ENCODE measurements at regions of chr7 and their contacts with region 1.

Region 1: DNA sequence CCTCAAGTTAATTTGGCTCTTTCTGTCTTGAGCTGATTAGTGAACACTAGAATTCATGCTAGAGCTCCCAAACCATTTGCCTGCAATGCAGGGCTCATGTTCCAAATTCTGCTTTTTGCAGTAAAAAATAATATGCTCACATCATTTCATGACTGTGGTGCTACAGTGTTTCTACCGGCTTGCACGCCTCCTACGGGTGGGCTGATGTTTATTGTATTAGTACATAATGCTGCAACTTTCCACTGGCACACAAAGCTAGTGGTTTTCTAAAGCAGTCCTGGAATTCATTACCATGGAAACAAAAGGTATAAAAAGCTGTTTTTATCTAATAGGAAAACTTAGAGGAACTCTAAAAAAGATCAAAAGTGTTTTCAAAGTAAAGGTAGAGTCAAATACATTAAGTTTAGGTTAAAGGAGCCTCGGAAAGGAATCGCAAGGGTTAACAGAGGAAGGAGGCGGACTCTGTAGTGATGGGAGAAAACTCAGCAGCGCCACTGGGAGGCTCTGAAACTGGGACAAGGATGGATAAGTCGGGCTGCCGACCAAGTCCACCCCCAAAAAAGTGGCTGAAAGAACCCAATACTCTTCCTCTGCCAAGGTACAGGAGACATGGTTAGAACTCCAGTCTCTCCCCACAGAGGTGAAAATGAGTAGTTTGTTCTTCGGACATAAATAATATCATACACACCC is 25.9 kb downstream of the GRM8 start:
- DNase-seq: no peak
- ATAC-seq: no peak
- H3K4me3 Mint-ChIP-seq: no peak overlapping the region
- H3K27ac Mint-ChIP-seq: no peak overlapping the region
- H3K4me1 Mint-ChIP-seq: no peaks in the 10 kb centered on the region
- H3K27me3 Mint-ChIP-seq: peaks cover 39% of the 10 kb centered on the region

Region 2: GRCh38 chr7:126790763-126791162 is 436.1 kb before region 1 on chr7:
- CTCF ChIA-PET with region 1: no interaction called
- POLR2A ChIA-PET with region 1: no interaction called
- intact Hi-C with region 1: no loop called
- DNase-seq: no peak
- ATAC-seq: no peak
- H3K4me3 Mint-ChIP-seq: no peak overlapping the region
- H3K27ac Mint-ChIP-seq: no peak overlapping the region
- H3K4me1 Mint-ChIP-seq: no peaks in the 10 kb centered on the region
- H3K27me3 Mint-ChIP-seq: peaks cover 8% of the 10 kb centered on the region

Region 3: DNA sequence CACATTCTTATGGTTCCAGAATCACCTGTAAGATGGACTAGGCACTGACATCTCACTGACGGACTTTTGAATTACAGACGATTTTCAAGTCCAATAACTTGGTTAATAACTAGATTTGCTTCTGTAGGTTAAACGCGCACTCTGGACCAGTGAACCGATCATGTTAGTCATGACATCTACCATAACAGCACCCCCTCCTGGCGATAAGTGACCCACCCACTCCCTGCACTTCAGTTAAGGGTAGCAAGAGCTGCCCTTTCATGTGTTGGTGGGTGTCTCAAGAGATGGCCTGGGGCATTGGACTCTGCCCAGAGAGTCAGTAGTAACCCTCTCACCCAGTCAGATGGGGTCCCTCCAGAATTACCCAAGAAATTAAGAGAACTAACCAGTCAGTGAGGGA is 13.0 kb after region 1 on chr7:
- CTCF ChIA-PET with region 1: interaction called, 4 read pairs
- POLR2A ChIA-PET with region 1: interaction called, 10 read pairs
- intact Hi-C with region 1: no loop called
- DNase-seq: peak; percentile 32
- ATAC-seq: no peak
- H3K4me3 Mint-ChIP-seq: no peak overlapping the region
- H3K27ac Mint-ChIP-seq: no peak overlapping the region
- H3K4me1 Mint-ChIP-seq: no peaks in the 10 kb centered on the region
- H3K27me3 Mint-ChIP-seq: peaks cover 40% of the 10 kb centered on the region

Region 4: GRCh38 chr7:127266047-127266446 is 39.2 kb after region 1 on chr7:
- CTCF ChIA-PET with region 1: no interaction called
- POLR2A ChIA-PET with region 1: no interaction called
- intact Hi-C with region 1: no loop called
- DNase-seq: no peak
- ATAC-seq: no peak
- H3K4me3 Mint-ChIP-seq: no peak overlapping the region
- H3K27ac Mint-ChIP-seq: no peak overlapping the region
- H3K4me1 Mint-ChIP-seq: no peaks in the 10 kb centered on the region
- H3K27me3 Mint-ChIP-seq: peaks cover 35% of the 10 kb centered on the region